CD8-positive, alpha-beta T cell (primary cell): ENCODE measurements at regions of chr2 and their contacts with region 1.

Region 1: GRCh38 chr2:198309673-198310280 is 505.4 kb downstream of the PLCL1 start:
- DNase-seq: peak; percentile 16 to 69 (median 50)
- ATAC-seq: peak; percentile 49
- H3K4me3 ChIP-seq: no peak overlapping the region
- H3K4me3 Mint-ChIP-seq: no peak overlapping the region
- H3K27ac ChIP-seq: no peak overlapping the region
- H3K27ac Mint-ChIP-seq: no peak overlapping the region
- H3K4me1 ChIP-seq: no peaks in the 10 kb centered on the region
- H3K4me1 Mint-ChIP-seq: no peaks in the 10 kb centered on the region
- H3K27me3 ChIP-seq: no peaks in the 10 kb centered on the region
- H3K27me3 Mint-ChIP-seq: peaks cover 37% of the 10 kb centered on the region
- CTCF ChIP-seq: peak; percentile 97

Region 2: DNA sequence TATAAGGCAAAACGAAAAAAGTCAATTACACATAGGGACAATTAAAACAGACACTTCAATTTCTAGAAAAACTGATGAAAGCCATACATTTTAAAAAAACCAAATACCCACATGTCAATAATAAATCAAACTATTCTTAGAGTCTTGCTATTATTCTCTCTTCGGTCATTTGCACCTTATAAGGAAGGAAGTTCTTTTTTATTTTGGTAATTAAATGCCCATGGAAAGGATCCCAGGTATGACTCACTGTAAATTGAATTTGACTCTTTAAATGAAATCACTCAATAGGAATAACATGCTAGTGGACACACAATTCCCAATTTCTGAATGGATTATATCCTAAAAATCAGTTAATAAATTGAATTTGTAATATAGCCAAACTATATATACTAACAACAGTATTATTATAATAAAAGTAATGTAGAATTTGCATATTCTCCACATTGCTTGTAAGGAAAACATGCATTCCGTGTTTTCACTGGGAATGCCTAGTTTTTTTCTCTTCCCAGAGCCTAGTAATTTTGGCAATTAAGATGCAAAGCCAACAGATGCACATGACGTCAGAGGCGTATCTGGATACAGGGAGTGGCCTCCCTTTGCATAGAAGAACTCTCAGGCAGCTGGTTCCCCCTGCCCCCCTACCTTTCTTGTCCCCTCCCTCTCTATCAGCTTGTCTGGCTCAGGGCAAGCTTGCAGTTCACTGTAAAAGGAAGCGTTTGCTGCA is 1229.8 kb before region 1 on chr2:
- CTCF ChIA-PET with region 1: no interaction called
- POLR2A ChIA-PET with region 1: no interaction called
- intact Hi-C with region 1: no loop called
- DNase-seq: no peak
- ATAC-seq: no peak
- H3K4me3 ChIP-seq: no peak overlapping the region
- H3K4me3 Mint-ChIP-seq: no peak overlapping the region
- H3K27ac ChIP-seq: no peak overlapping the region
- H3K27ac Mint-ChIP-seq: peak overlapping the region; percentile 60
- H3K4me1 ChIP-seq: no peaks in the 10 kb centered on the region
- H3K4me1 Mint-ChIP-seq: peaks cover 15% of the 10 kb centered on the region
- H3K27me3 ChIP-seq: no peaks in the 10 kb centered on the region
- H3K27me3 Mint-ChIP-seq: no peaks in the 10 kb centered on the region
- CTCF ChIP-seq: no peak

Region 3: GRCh38 chr2:198004921-198005829 is 304.6 kb before region 1 on chr2:
- CTCF ChIA-PET with region 1: no interaction called
- POLR2A ChIA-PET with region 1: no interaction called
- intact Hi-C with region 1: no loop called
- DNase-seq: peak in 2 of 9 experiments; percentile 30 to 55
- ATAC-seq: peak; percentile 31
- H3K4me3 ChIP-seq: peak overlapping the region in 1 of 2 experiments; percentile 12
- H3K4me3 Mint-ChIP-seq: peak overlapping the region; percentile 42
- H3K27ac ChIP-seq: peak overlapping the region in 1 of 2 experiments; percentile 49
- H3K27ac Mint-ChIP-seq: peak overlapping the region; percentile 47
- H3K4me1 ChIP-seq: no peaks in the 10 kb centered on the region
- H3K4me1 Mint-ChIP-seq: peaks cover 16% of the 10 kb centered on the region
- H3K27me3 ChIP-seq: no peaks in the 10 kb centered on the region
- H3K27me3 Mint-ChIP-seq: no peaks in the 10 kb centered on the region
- CTCF ChIP-seq: no peak

Region 4: DNA sequence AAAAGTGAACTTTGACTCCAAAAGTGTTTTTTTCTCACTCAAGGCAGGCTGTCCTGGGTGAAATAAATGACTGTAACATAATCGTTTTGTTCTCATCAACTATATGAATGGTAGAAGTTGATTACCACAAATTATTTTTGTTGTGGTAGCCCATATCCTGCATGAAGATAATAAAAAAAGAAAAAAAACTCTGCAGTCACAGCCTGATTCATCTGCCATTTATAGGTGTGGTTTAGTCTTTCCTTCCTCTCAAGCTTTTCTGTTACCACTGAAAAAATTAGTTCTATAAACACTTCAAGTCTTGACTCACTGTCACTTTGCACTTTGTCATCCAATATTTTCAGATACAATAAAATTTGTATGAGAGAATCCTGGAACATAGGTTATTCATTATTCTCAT is 16.7 kb after region 1 on chr2:
- CTCF ChIA-PET with region 1: interaction called, 11 read pairs
- POLR2A ChIA-PET with region 1: no interaction called
- intact Hi-C with region 1: no loop called
- DNase-seq: peak in 2 of 9 experiments; percentile 41 to 65
- ATAC-seq: peak; percentile 86
- H3K4me3 ChIP-seq: no peak overlapping the region
- H3K4me3 Mint-ChIP-seq: no peak overlapping the region
- H3K27ac ChIP-seq: no peak overlapping the region
- H3K27ac Mint-ChIP-seq: no peak overlapping the region
- H3K4me1 ChIP-seq: peaks cover 21% of the 10 kb centered on the region
- H3K4me1 Mint-ChIP-seq: peaks cover 20% of the 10 kb centered on the region
- H3K27me3 ChIP-seq: peaks cover 0 to 7% of the 10 kb centered on the region in 2 experiments
- H3K27me3 Mint-ChIP-seq: peaks cover 33% of the 10 kb centered on the region
- CTCF ChIP-seq: no peak

Region 5: DNA sequence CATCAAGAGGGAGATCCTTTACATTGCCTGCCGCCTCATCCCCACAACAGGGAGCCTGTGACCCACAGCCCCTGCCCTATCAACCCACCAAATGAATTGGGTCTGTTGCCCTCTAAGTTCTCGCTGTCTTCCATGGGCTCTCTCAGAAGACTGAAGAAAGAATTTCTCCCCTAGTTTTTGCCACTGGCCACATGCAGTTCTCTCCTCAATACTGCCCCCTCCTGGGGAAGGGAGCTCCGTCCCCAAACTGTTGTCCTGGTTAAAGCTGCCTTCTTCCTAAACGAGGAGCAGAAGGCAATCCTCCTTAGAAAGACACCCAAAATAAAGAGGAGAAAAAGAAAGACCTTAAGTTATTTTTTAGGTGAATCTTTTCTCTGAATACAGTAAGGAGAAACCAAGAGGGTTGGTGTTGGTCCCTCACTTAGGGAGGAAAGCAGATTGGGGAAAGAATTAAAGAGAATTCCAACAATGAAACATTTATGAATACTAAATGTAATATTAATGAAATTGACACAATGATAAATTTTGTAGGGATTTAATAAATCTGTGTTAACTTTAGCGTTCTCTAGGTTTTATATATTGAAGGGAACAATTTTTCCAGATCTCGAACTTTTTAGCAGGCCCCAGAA is 1179.1 kb after region 1 on chr2:
- CTCF ChIA-PET with region 1: interaction called, 42 read pairs
- POLR2A ChIA-PET with region 1: no interaction called
- intact Hi-C with region 1: loop called in 1 of 2 experiments (anchors 1 kb)
- DNase-seq: peak in 7 of 9 experiments; percentile 12 to 55 (median 31)
- ATAC-seq: no peak
- H3K4me3 ChIP-seq: no peak overlapping the region
- H3K4me3 Mint-ChIP-seq: no peak overlapping the region
- H3K27ac ChIP-seq: no peak overlapping the region
- H3K27ac Mint-ChIP-seq: no peak overlapping the region
- H3K4me1 ChIP-seq: no peaks in the 10 kb centered on the region
- H3K4me1 Mint-ChIP-seq: no peaks in the 10 kb centered on the region
- H3K27me3 ChIP-seq: peaks cover 0 to 4% of the 10 kb centered on the region in 2 experiments
- H3K27me3 Mint-ChIP-seq: peaks cover 18% of the 10 kb centered on the region
- CTCF ChIP-seq: peak; percentile 65

Region 6: GRCh38 chr2:199739413-199740110 is 1429.8 kb after region 1 on chr2:
- CTCF ChIA-PET with region 1: interaction called, 38 read pairs
- POLR2A ChIA-PET with region 1: no interaction called
- intact Hi-C with region 1: loop called (anchors 1 kb)
- DNase-seq: peak; percentile 34 to 73 (median 53)
- ATAC-seq: no peak
- H3K4me3 ChIP-seq: no peak overlapping the region
- H3K4me3 Mint-ChIP-seq: no peak overlapping the region
- H3K27ac ChIP-seq: no peak overlapping the region
- H3K27ac Mint-ChIP-seq: no peak overlapping the region
- H3K4me1 ChIP-seq: no peaks in the 10 kb centered on the region
- H3K4me1 Mint-ChIP-seq: peaks cover 5% of the 10 kb centered on the region
- H3K27me3 ChIP-seq: peaks cover 0 to 3% of the 10 kb centered on the region in 2 experiments
- H3K27me3 Mint-ChIP-seq: peaks cover 12% of the 10 kb centered on the region
- CTCF ChIP-seq: peak; percentile 96

Region 7: DNA sequence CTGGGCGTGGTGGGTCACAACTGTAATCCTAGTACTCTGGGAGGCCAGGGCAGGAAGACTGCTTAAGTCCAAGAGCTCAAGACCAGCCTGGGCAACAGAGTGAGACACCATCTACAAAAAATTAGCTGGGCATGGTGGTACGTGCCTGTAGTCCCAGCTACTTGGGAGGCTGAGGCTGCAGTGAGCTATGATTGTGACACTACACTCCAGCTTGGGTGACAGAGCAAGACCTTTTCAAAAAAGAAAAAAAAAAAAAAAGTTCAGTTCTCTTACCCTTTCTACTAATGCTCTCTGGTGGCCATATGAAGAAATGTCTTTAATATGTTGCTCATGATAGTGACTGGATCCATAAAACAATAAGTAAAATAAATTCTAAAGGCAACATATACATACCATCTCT is 1630.6 kb after region 1 on chr2:
- CTCF ChIA-PET with region 1: no interaction called
- POLR2A ChIA-PET with region 1: no interaction called
- intact Hi-C with region 1: loop called in 1 of 2 experiments (anchors 5 kb)
- DNase-seq: peak in 2 of 9 experiments; percentile 11 to 15
- ATAC-seq: peak; percentile 54
- H3K4me3 ChIP-seq: no peak overlapping the region
- H3K4me3 Mint-ChIP-seq: no peak overlapping the region
- H3K27ac ChIP-seq: no peak overlapping the region
- H3K27ac Mint-ChIP-seq: no peak overlapping the region
- H3K4me1 ChIP-seq: no peaks in the 10 kb centered on the region
- H3K4me1 Mint-ChIP-seq: peaks cover 10% of the 10 kb centered on the region
- H3K27me3 ChIP-seq: no peaks in the 10 kb centered on the region
- H3K27me3 Mint-ChIP-seq: no peaks in the 10 kb centered on the region
- CTCF ChIP-seq: no peak